Left ventricle myocardium inferior (tissue), 1 donor: ENCODE measurements at regions of chr15 and their contacts with region 1.

Region 1: GRCh38 chr15:68875377-68876116 is 54.8 kb upstream of the SPESP1 start:
- DNase-seq: peak; percentile 91
- H3K4me3 ChIP-seq: peak overlapping the region; percentile 56
- H3K27ac ChIP-seq: no peak overlapping the region
- H3K4me1 ChIP-seq: peaks cover 5% of the 10 kb centered on the region
- H3K27me3 ChIP-seq: peaks cover 6% of the 10 kb centered on the region
- CTCF ChIP-seq: peak; percentile 88

Region 2: GRCh38 chr15:68550481-68551295 is 324.9 kb before region 1 on chr15:
- intact Hi-C with region 1: loop called (anchors 5 kb)
- DNase-seq: peak; percentile 70
- H3K4me3 ChIP-seq: no peak overlapping the region
- H3K27ac ChIP-seq: no peak overlapping the region
- H3K4me1 ChIP-seq: peaks cover 4% of the 10 kb centered on the region
- H3K27me3 ChIP-seq: no peaks in the 10 kb centered on the region
- CTCF ChIP-seq: peak; percentile 96

Region 3: DNA sequence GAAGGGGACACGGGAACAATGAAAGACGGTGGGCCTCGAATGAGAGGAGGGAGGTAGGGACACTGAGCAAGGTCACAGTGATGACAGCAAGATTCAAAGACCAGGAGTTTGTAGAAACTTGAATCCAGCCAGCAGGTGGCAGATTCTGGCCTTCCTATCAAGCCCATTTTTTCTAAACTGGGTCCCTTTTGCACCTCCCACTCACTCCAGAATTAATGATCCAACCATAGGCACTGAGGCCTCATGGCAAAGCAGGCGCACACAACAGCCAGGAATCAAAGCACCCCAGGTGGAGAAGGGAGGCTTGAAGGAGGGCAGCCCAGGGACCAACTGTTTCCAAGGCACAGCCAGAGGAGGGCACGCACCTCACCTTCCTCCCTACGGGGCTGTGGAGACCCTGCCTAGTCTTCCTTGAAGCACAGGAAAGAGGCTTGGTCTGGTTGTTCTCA is 145.1 kb before region 1 on chr15:
- intact Hi-C with region 1: loop called (anchors 10 kb)
- DNase-seq: no peak
- H3K4me3 ChIP-seq: peak overlapping the region; percentile 29
- H3K27ac ChIP-seq: peak overlapping the region; percentile 90
- H3K4me1 ChIP-seq: peaks cover 87% of the 10 kb centered on the region
- H3K27me3 ChIP-seq: no peaks in the 10 kb centered on the region
- CTCF ChIP-seq: peak; percentile 69

Region 4: DNA sequence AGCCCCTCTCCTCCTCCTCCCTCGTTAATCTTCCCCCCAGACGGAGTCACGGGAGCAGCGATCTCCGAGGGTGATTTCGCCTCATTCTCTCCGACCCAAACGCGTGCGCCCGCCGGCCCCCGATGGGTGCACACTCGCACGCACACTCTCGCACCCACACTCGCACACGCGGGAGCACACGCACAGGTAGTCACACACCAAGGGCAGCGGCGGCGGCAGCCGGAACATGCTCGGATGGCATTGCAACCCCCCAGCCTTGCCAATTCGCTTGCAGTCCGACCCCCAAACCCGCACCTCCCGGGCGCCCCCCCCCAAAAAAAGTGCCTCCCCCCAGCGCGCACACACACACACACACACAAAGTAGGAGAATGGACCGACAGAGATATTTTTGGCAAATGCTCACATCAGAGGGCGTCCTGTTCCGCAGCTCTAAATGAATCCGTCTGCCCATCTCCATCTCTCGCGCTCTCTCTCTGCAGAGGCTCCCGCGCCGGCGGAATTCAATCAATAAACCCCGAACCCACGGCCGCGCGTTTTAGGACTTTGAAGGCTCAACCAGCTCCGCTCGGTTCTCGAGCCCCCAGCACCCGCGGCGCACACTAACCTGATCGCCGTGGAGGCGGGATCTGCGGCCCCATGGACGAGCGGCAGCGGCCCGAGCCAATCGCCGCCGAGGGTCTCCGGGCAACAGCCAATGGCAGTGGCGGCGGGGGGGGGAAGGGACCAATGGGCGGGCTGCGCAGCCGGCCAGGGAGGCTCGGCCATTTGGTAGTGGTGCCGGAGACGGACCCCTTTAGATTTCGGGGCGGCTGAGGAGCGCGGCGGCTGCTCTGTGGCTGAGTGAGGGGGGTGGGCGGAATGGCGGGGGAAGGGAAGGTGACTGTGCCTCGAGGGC is 55.0 kb before region 1 on chr15 and contains the start of gene ANP32A:
- intact Hi-C with region 1: loop called (anchors 10 kb)
- DNase-seq: peak; percentile 98
- H3K4me3 ChIP-seq: peak within 1 kb of the TSS; percentile 84
- H3K27ac ChIP-seq: peak within 1 kb of the TSS; percentile 97
- H3K4me1 ChIP-seq: peaks cover 66% of the 10 kb centered on the region
- H3K27me3 ChIP-seq: no peaks in the 10 kb centered on the region
- CTCF ChIP-seq: no peak
- total RNA-seq, gene ANP32A: 150 TPM